Heart left ventricle (tissue), 16 donors: ENCODE measurements at regions of chr14 and their contacts with region 1.

Region 1: GRCh38 chr14:34227834-34228649 is 234.0 kb downstream of the SPTSSA start:
- DNase-seq: peak; percentile 52 to 76 (median 68)
- ATAC-seq: peak; percentile 87 to 96 (median 92)
- H3K4me3 ChIP-seq: peak overlapping the region in 9 of 12 donors; percentile 13 to 51 (median 31)
- H3K27ac ChIP-seq: peak overlapping the region in 2 of 12 donors; percentile 23 to 32
- H3K4me1 ChIP-seq: peaks cover 0 to 32% (median 7%) of the 10 kb centered on the region in 12 donors
- H3K27me3 ChIP-seq: no peaks in the 10 kb centered on the region
- CTCF ChIP-seq: peak; percentile 65 to 91 (median 84)
- POLR2A ChIP-seq: no peak

Region 2: GRCh38 chr14:33839193-33840076 is 388.6 kb before region 1 on chr14:
- intact Hi-C with region 1: loop called (anchors 1 to 5 kb)
- DNase-seq: peak in 4 of 5 donors; percentile 37 to 53 (median 47)
- ATAC-seq: peak; percentile 65 to 81 (median 74)
- H3K4me3 ChIP-seq: no peak overlapping the region
- H3K27ac ChIP-seq: no peak overlapping the region
- H3K4me1 ChIP-seq: peaks cover 0 to 19% (median 2%) of the 10 kb centered on the region in 12 donors
- H3K27me3 ChIP-seq: no peaks in the 10 kb centered on the region
- CTCF ChIP-seq: peak; percentile 77 to 95 (median 86)
- POLR2A ChIP-seq: no peak

Region 3: GRCh38 chr14:33938131-33938949 is 289.7 kb before region 1 on chr14:
- intact Hi-C with region 1: loop called in 3 of 10 experiments (anchors 2 to 10 kb)
- DNase-seq: peak; percentile 80 to 89 (median 88)
- ATAC-seq: peak; percentile 94 to 97 (median 96)
- H3K4me3 ChIP-seq: peak overlapping the region in 9 of 12 donors; percentile 6 to 41 (median 27)
- H3K27ac ChIP-seq: peak overlapping the region; percentile 57 to 88 (median 80)
- H3K4me1 ChIP-seq: peaks cover 0 to 80% (median 46%) of the 10 kb centered on the region in 12 donors
- H3K27me3 ChIP-seq: no peaks in the 10 kb centered on the region
- CTCF ChIP-seq: no peak
- POLR2A ChIP-seq: no peak

Region 4: DNA sequence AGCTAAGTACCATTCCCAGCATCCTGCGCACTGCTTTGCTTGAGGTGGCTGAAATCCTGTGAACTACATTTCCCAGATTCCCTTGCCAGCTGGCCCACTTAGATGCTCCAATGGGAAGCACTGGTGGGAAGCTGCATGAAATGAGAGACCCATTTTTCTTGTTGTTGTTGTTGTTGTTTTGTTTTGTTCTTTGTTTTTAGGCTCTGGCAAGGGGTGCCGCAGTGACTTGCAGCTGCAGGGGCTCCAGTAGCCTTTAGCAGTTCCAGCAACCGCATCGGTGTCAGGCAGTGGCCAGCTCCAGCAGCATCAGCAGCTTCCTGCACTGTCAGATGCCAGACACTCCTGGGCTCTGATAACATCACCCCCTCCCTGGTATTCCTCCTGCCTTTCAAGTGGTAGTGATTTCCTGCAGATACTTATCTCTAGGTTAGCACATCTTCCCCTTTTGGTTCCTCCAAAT is 268.3 kb before region 1 on chr14:
- intact Hi-C with region 1: loop called in 5 of 10 experiments (anchors 5 to 10 kb)
- DNase-seq: no peak
- ATAC-seq: peak in 2 of 4 donors; percentile 57
- H3K4me3 ChIP-seq: no peak overlapping the region
- H3K27ac ChIP-seq: no peak overlapping the region
- H3K4me1 ChIP-seq: peaks cover 0 to 9% (median 0%) of the 10 kb centered on the region in 12 donors
- H3K27me3 ChIP-seq: no peaks in the 10 kb centered on the region
- CTCF ChIP-seq: no peak
- POLR2A ChIP-seq: no peak

Region 5: GRCh38 chr14:34098045-34098984 is 129.7 kb before region 1 on chr14:
- intact Hi-C with region 1: loop called in 7 of 10 experiments (anchors 2 to 5 kb)
- DNase-seq: peak in 2 of 5 donors; percentile 27 to 43
- ATAC-seq: peak; percentile 21 to 65 (median 47)
- H3K4me3 ChIP-seq: no peak overlapping the region
- H3K27ac ChIP-seq: peak overlapping the region in 2 of 12 donors; percentile 3 to 13
- H3K4me1 ChIP-seq: peaks cover 0 to 20% (median 2%) of the 10 kb centered on the region in 12 donors
- H3K27me3 ChIP-seq: no peaks in the 10 kb centered on the region
- CTCF ChIP-seq: peak; percentile 28 to 78 (median 63)
- POLR2A ChIP-seq: no peak

Region 6: DNA sequence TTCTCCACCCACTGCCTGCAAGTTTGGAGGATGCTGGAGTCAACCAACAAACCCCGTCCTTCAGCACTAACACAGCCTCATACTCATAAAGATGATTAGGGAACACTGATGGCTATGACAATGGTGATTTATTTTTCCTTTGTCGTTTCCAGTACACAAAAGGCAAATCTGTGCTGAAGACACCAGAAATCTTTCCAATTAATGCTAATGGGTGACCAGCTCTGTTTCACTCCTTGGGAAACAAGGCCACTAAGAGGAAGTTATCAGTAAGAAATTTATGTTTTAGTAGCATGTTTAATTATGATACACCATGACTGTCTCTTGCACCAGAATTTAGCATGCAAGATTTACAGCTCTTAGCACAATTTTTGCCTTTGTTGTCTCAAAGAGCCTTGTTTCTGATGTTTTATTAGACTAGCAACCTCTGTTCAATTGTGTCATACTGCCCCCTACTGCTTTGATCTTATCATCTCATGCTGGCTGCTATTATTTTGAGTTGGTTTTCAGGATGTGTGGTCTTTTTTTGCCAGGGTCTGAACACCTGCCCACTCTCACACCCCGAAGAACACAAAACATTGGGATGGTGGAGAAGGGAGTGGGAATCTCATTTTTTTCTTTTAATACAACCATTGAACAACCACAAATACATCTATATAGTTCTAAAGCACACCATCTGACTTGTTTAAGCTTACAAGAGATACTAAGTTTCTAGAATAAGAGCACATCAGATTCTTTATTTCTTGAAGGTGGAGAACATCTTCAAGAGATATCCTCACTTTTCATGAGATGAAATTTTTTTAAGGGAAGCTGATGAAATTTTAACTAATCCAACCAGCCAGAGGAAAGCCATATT is 73.1 kb after region 1 on chr14:
- intact Hi-C with region 1: loop called in 4 of 10 experiments (anchors 5 kb)
- DNase-seq: no peak
- ATAC-seq: peak in 3 of 4 donors; percentile 38 to 70 (median 45)
- H3K4me3 ChIP-seq: no peak overlapping the region
- H3K27ac ChIP-seq: no peak overlapping the region
- H3K4me1 ChIP-seq: no peaks in the 10 kb centered on the region
- H3K27me3 ChIP-seq: no peaks in the 10 kb centered on the region
- CTCF ChIP-seq: peak; percentile 46 to 74 (median 62)
- POLR2A ChIP-seq: no peak